PC-9 (cell line): ENCODE measurements at regions of chr17 and their contacts with region 1.

Region 1: GRCh38 chr17:49016788-49017463 is 19.7 kb downstream of the IGF2BP1 start:
- DNase-seq: peak in 1 of 2 experiments; percentile 80
- H3K4me3 ChIP-seq: no peak overlapping the region
- H3K27ac ChIP-seq: no peak overlapping the region
- H3K4me1 ChIP-seq: peaks cover 18% of the 10 kb centered on the region
- H3K27me3 ChIP-seq: no peaks in the 10 kb centered on the region
- CTCF ChIP-seq: no peak

Region 2: DNA sequence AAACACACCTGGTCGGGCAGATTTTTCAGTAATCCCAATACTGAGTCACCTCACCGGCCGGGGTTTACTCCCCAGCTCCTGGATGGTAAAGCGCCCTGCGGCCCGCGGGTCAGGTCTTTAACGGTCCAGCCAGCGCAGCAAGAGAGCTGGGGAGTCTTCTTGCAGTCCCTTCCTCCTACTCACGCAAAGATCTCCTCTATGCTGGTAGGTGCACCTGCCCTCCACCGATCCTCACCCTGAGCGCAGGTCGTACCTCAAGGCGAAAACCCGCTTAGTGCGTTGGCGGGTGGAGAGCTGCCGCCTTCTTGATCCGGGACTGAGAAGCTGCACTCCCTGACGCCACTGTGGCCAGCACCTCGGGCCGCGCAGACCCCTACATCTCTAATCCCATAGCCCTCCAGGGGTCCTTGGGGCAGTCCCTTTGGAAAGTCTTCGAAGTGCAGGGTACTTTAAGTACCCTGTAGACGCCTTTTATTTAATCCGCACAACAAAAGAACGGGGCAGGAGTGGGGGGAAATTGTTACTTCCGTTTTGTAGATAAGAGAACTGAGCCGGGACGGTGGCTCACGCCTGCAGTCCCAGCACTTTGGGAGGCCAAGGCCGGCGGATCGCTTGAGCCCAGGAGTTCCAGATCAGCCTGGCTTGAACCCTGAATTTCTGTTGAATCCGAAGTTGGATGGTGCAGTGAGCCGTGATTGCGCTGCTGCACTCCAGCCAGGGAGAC is 278.0 kb before region 1 on chr17:
- CTCF ChIA-PET with region 1: no interaction called
- POLR2A ChIA-PET with region 1: no interaction called
- intact Hi-C with region 1: no loop called
- DNase-seq: no peak
- H3K4me3 ChIP-seq: no peak overlapping the region
- H3K27ac ChIP-seq: no peak overlapping the region
- H3K4me1 ChIP-seq: no peaks in the 10 kb centered on the region
- H3K27me3 ChIP-seq: peaks cover 97% of the 10 kb centered on the region
- CTCF ChIP-seq: no peak

Region 3: DNA sequence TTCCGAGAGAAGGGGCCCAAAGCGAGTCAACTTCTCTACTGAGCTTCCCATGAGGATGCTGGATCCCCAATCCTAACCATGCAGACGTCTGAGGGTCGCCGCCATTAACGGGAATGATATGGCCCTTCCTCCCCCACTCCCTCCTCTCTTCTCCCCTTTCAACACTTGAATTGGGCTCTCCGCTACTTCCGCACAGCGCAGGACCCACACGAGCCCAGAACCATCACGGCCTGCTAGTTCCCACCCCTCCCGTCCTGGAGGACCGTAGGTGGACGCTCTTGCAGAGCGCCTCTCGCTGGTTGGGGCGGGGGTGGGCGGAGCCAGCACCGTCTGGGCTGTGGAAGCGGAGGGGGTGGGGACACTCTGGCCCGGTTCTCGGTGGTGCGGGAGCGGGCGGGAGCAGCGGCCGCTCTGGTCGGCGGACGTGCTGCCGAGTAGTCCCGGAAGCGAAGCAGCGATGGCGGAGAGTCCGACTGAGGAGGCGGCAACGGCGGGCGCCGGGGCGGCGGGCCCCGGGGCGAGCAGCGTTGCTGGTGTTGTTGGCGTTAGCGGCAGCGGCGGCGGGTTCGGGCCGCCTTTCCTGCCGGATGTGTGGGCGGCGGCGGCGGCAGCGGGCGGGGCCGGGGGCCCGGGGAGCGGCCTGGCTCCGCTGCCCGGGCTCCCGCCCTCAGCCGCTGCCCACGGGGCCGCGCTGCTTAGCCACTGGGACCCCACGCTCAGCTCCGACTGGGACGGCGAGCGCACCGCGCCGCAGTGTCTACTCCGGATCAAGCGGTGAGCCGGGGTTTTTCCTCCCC is 108.7 kb before region 1 on chr17 and contains the start of gene UBE2Z:
- CTCF ChIA-PET with region 1: interaction called, 15 read pairs
- POLR2A ChIA-PET with region 1: no interaction called
- intact Hi-C with region 1: no loop called
- DNase-seq: peak; percentile 85 to 86
- H3K4me3 ChIP-seq: peak within 1 kb of the TSS; percentile 89
- H3K27ac ChIP-seq: peak within 1 kb of the TSS; percentile 90
- H3K4me1 ChIP-seq: peaks cover 33% of the 10 kb centered on the region
- H3K27me3 ChIP-seq: no peaks in the 10 kb centered on the region
- CTCF ChIP-seq: 0 out of 2 replicates have a peak, but pooled peaks have one; percentile 16
- total RNA-seq, gene UBE2Z: 99.4 and 100.0 TPM in 2 replicates

Region 4: GRCh38 chr17:48928876-48929811 is 87.8 kb before region 1 on chr17:
- CTCF ChIA-PET with region 1: no interaction called
- POLR2A ChIA-PET with region 1: no interaction called
- intact Hi-C with region 1: no loop called
- DNase-seq: no peak
- H3K4me3 ChIP-seq: no peak overlapping the region
- H3K27ac ChIP-seq: no peak overlapping the region
- H3K4me1 ChIP-seq: no peaks in the 10 kb centered on the region
- H3K27me3 ChIP-seq: no peaks in the 10 kb centered on the region
- CTCF ChIP-seq: no peak

Region 5: DNA sequence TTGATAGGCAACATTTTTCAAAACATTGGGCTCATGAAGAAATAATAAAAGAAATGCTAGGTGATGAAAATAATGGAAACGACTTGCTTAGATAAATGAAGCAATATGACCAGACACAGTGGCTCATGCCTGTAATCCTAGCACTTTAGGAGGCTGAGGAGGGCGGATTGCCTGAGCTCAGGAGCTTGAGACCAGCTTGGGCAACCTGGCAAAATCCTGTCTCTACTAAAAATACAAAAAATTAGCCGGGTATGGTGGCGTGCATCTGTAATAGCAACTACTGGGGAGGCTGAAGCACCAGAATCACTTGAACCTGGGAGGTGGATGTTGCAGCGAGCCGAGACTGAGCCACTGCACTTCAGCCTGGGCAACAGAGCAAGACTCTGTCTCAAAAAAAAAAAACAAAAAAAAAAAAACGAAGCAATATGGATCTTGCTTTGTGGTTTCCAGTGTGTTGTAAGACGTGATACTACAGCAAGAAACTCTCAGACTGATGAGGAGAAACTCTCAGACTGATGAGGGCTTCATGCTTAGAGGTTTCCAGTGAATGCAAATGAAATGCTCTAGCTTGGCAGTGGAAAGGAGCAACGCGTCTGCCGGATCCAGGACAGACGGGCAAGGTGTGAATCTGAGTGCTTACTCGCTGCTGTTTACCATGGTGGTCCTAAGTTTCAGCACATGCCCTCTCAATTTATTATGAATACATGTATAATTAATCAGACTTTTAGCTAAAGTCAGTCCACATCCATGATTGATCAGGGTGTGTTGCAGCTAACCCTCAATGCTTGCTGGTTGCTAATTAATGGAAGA is 31.3 kb before region 1 on chr17:
- CTCF ChIA-PET with region 1: no interaction called
- POLR2A ChIA-PET with region 1: no interaction called
- intact Hi-C with region 1: no loop called
- DNase-seq: no peak
- H3K4me3 ChIP-seq: no peak overlapping the region
- H3K27ac ChIP-seq: no peak overlapping the region
- H3K4me1 ChIP-seq: no peaks in the 10 kb centered on the region
- H3K27me3 ChIP-seq: no peaks in the 10 kb centered on the region
- CTCF ChIP-seq: no peak

Region 6: DNA sequence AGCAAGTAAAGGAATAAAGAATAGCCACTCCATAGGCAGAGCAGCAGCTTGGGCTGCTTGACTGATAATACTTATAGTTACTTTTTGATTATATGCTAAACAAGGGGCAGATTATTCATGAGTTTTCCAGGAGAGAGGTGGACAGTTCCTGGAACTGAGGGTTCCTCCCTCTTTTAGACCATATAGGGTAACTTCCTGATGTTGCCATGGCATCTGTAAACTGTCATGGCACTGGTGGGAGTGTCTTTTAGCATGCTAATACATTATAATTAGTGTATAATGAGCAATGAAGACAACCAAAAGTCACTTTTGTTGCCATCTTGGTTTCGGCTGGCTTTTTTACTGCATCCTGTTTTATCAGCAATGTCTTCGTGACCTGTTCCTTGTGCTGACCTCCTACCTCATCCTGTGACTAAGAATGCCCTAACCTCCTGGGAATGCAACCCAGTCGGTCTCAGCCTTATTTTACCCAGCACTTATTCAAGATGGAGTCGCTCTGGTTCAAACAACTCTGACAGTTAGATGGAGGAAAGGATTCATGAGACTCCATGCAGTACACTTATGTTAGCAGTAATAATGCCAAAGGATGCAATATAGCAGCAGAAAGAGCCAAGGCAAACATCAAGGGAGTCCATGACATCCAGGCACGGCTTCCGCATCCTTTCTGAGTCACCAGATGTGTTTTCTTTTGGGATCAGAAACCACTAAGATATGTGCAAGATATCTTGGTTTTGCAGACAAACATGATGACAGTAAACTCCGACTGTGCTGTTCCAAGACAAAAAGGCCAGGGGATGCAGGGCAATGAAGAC is 59.9 kb after region 1 on chr17:
- CTCF ChIA-PET with region 1: no interaction called
- POLR2A ChIA-PET with region 1: no interaction called
- intact Hi-C with region 1: no loop called
- DNase-seq: peak; percentile 30 to 86
- H3K4me3 ChIP-seq: no peak overlapping the region
- H3K27ac ChIP-seq: peak overlapping the region; percentile 55
- H3K4me1 ChIP-seq: peaks cover 20% of the 10 kb centered on the region
- H3K27me3 ChIP-seq: no peaks in the 10 kb centered on the region
- CTCF ChIP-seq: no peak